CD4-positive, alpha-beta T cell (primary cell): ENCODE measurements at regions of chr12 and their contacts with region 1.

Region 1: DNA sequence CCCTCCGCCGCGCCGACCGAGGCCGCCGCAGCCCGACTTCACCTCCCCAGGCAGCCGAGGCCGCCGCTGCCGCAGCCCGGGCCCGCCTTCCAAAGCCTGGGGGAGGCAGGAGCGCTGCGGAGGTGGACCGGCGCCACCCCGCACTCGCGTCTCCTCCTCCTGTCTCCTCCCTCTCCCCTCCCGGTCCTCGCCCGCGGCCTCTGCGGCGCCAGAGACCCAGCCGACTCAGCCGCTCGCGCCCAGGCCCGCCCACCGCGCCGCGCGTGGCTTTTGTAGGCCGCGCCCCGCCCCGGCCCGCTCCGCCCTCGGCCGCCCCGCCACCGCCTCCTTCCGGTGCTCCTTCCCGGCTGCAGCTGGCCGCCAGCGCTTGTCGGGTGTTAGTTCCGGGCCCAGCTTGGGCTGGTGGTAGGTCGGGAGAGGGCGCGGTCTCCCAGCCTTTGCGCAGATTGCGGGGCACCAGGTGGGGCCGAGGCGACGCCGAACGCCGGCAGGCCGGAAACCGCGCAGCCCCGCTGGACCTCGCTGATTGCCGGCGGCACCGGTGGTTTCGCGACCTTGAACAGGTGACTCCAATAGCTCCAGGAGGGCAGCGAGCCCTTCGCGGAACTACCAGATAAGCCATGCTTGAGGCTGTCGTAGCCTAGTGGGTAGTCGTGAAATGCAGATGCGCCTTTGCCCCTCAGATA is at the start of gene CAPRIN2:
- DNase-seq: peak; percentile 86 to 97 (median 94)
- ATAC-seq: peak; percentile 90
- H3K4me3 ChIP-seq: peak within 1 kb of the TSS; percentile 81
- H3K4me3 Mint-ChIP-seq: peak within 1 kb of the TSS; percentile 94
- H3K27ac ChIP-seq: peak within 1 kb of the TSS; percentile 51 to 76
- H3K27ac Mint-ChIP-seq: peak within 1 kb of the TSS; percentile 77
- H3K4me1 ChIP-seq: peaks cover 16% of the 10 kb centered on the region
- H3K4me1 Mint-ChIP-seq: peaks cover 45% of the 10 kb centered on the region
- H3K27me3 ChIP-seq: no peaks in the 10 kb centered on the region
- H3K27me3 Mint-ChIP-seq: no peaks in the 10 kb centered on the region
- CTCF ChIP-seq: peak; percentile 18
- total RNA-seq, gene CAPRIN2: 21.2 to 24.6 TPM

Region 2: DNA sequence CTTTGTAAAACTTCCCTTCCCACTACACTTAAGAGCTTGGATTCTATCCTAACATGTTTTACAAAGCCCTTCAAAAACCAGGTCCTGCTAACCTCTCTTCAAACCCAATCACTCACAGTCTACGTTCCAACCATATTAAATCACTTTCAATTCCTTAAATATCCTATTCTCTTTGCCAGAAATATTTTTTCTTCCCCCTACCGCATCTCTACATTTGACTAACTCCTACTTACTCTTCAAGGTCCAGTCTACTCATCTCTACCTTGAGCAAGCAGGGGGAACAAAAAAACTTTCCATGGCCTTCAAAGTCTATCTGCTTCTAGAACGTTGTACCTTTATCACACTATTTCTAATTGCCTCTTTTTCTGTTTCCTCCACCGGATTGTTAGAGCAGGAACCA is 1379.9 kb before region 1 on chr12:
- CTCF ChIA-PET with region 1: no interaction called
- POLR2A ChIA-PET with region 1: no interaction called
- intact Hi-C with region 1: loop called in 1 of 2 experiments (anchors 5 kb)
- DNase-seq: no peak
- ATAC-seq: no peak
- H3K4me3 ChIP-seq: no peak overlapping the region
- H3K4me3 Mint-ChIP-seq: no peak overlapping the region
- H3K27ac ChIP-seq: no peak overlapping the region
- H3K27ac Mint-ChIP-seq: no peak overlapping the region
- H3K4me1 ChIP-seq: no peaks in the 10 kb centered on the region
- H3K4me1 Mint-ChIP-seq: peaks cover 20% of the 10 kb centered on the region
- H3K27me3 ChIP-seq: no peaks in the 10 kb centered on the region
- H3K27me3 Mint-ChIP-seq: no peaks in the 10 kb centered on the region
- CTCF ChIP-seq: no peak

Region 3: DNA sequence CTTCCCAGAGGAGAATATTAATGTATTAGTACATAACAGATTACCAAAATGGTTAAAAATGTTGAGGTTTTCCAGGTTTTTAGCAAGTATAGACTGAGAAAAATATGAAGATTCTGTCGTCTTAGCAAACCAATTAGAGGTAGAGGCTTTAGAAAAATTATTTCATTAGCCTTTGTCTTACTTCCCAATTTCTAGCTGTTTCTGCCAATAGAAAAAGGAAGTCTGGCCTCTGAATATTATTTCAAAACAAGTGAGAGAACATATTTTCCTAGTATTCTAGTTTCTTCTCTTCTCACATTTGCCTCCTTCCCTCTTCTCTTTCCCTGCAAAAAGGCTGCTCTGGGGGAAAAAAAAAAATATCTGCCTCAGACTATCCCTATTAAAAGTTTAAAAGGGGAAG is 75.6 kb before region 1 on chr12:
- CTCF ChIA-PET with region 1: no interaction called
- POLR2A ChIA-PET with region 1: no interaction called
- intact Hi-C with region 1: no loop called
- DNase-seq: no peak
- ATAC-seq: no peak
- H3K4me3 ChIP-seq: no peak overlapping the region
- H3K4me3 Mint-ChIP-seq: no peak overlapping the region
- H3K27ac ChIP-seq: no peak overlapping the region
- H3K27ac Mint-ChIP-seq: no peak overlapping the region
- H3K4me1 ChIP-seq: no peaks in the 10 kb centered on the region
- H3K4me1 Mint-ChIP-seq: no peaks in the 10 kb centered on the region
- H3K27me3 ChIP-seq: no peaks in the 10 kb centered on the region
- H3K27me3 Mint-ChIP-seq: no peaks in the 10 kb centered on the region
- CTCF ChIP-seq: no peak

Region 4: DNA sequence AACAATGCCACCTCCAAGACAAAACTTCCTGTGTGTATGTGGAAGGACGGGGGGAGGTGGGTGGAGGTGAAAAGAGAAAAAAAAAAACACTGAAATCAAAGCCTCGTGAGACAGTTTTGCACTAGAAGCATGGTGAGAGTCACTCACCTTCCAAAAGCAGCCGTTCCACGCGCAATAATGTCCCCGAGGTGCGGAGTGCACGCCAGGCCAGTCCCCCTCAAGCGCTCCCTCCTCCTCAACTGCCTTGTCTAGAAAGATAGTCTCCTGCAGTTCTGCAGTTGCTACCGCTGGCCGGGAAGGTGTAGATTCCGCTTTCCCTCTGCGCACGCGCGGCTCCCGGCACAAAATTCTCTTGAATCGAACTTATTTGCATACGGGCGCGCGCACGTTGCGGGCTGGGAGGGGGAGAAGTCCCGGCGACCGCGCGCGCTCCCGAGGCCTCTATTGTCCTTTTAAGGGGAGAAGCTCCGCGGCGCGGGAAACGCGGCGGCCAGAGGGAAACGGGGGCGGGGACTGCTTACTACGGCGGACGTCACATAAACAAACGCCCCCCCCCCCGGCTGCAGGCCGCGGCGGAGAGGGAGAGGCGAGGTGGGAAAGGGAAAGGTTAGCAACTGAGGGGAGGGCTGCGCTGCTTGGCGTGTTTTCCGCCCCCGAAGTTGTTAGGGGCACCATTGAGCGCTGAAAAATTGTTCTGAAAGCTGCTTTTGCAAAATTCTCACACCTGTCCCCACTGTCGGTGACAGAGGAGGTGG is 571.2 kb after region 1 on chr12 and contains the start of gene SINHCAF:
- CTCF ChIA-PET with region 1: no interaction called
- POLR2A ChIA-PET with region 1: no interaction called
- intact Hi-C with region 1: loop called in 1 of 2 experiments (anchors 5 kb)
- DNase-seq: peak; percentile 96 to 100 (median 99)
- ATAC-seq: peak; percentile 52
- H3K4me3 ChIP-seq: peak within 1 kb of the TSS; percentile 99
- H3K4me3 Mint-ChIP-seq: peak within 1 kb of the TSS; percentile 92
- H3K27ac ChIP-seq: peak within 1 kb of the TSS; percentile 77 to 95
- H3K27ac Mint-ChIP-seq: peak within 1 kb of the TSS; percentile 85
- H3K4me1 ChIP-seq: peaks cover 27% of the 10 kb centered on the region
- H3K4me1 Mint-ChIP-seq: peaks cover 32% of the 10 kb centered on the region
- H3K27me3 ChIP-seq: no peaks in the 10 kb centered on the region
- H3K27me3 Mint-ChIP-seq: no peaks in the 10 kb centered on the region
- CTCF ChIP-seq: no peak
- total RNA-seq, gene SINHCAF: 103 to 119 TPM